ENCODE measurements at regions of chr20 and their contacts with region 1.

Region 1: GRCh38 chr20:63782051-63782471 is 42.5 kb downstream of the SLC2A4RG start:
- DNase-seq: no peak
- ATAC-seq: no peak
- H3K4me3 ChIP-seq: no peak overlapping the region
- H3K27ac ChIP-seq: no peak overlapping the region
- H3K4me1 ChIP-seq: no peaks in the 10 kb centered on the region
- H3K27me3 ChIP-seq: no peaks in the 10 kb centered on the region
- CTCF ChIP-seq: no peak

Region 2: DNA sequence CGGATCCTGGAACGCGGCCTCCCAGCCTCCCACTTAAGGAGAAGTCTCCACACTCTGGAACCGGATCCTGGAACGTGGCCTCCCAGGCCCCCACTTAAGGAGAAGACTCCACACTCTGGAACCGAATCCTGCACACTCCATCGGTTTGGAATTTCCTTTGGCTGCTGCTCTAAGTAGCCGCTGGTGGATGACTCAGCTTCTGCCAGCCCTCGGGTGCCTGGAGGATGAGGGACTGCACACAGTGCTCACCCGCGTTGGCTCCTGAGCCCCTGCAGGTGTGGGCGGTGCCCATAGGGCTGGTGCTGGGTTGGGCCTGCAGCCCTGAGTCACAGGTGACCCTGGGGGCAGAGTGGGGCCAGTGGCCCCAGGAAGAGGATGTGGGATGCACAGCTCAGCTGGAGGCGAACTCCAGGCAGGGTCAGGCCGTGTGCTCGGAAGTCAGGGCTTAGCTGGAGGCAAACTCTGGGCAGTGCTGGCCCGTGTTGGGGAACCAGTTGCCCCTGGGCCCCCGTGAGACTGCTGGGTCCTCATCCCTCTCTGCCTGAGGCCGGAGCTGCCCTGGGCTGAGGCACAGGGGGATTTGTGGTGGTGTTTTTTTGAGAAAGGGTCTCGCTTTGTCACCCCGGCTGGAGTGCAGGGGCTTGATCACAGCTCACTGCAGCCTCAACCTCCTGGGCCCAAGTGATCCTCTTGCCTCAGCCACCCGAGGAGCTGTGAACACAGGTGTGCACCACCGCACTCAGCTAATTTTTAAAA is 99.5 kb before region 1 on chr20:
- intact Hi-C with region 1: no loop called
- DNase-seq: peak in 1 of 6 donors; percentile 25
- ATAC-seq: peak in 3 of 4 donors; percentile 39 to 50 (median 40)
- H3K4me3 ChIP-seq: no peak overlapping the region
- H3K27ac ChIP-seq: peak overlapping the region in 1 of 4 donors; percentile 17
- H3K4me1 ChIP-seq: peaks cover 0 to 2% (median 0%) of the 10 kb centered on the region in 3 donors
- H3K27me3 ChIP-seq: no peaks in the 10 kb centered on the region
- CTCF ChIP-seq: no peak

Region 3: GRCh38 chr20:63973636-63974402 is 191.8 kb after region 1 on chr20:
- intact Hi-C with region 1: loop called in 1 of 3 experiments (anchors 5 kb)
- DNase-seq: peak; percentile 80 to 98 (median 92)
- ATAC-seq: peak; percentile 81 to 92 (median 86)
- H3K4me3 ChIP-seq: peak overlapping the region in 2 of 4 donors; percentile 16 to 36
- H3K27ac ChIP-seq: peak overlapping the region in 1 of 4 donors; percentile 37
- H3K4me1 ChIP-seq: peaks cover 0 to 7% (median 0%) of the 10 kb centered on the region in 3 donors
- H3K27me3 ChIP-seq: no peaks in the 10 kb centered on the region
- CTCF ChIP-seq: peak; percentile 94 to 99 (median 98)